GM18951 (cell line): ENCODE measurements at regions of chr19 and their contacts with region 1.

Region 1: GRCh38 chr19:33235269-33235995 is 9.8 kb upstream of the SLC7A10 start:
- POLR2A ChIP-seq: no peak

Region 2: GRCh38 chr19:33029746-33030303 is 205.6 kb before region 1 on chr19:
- in situ Hi-C with region 1: no loop called
- POLR2A ChIP-seq: no peak

Region 3: DNA sequence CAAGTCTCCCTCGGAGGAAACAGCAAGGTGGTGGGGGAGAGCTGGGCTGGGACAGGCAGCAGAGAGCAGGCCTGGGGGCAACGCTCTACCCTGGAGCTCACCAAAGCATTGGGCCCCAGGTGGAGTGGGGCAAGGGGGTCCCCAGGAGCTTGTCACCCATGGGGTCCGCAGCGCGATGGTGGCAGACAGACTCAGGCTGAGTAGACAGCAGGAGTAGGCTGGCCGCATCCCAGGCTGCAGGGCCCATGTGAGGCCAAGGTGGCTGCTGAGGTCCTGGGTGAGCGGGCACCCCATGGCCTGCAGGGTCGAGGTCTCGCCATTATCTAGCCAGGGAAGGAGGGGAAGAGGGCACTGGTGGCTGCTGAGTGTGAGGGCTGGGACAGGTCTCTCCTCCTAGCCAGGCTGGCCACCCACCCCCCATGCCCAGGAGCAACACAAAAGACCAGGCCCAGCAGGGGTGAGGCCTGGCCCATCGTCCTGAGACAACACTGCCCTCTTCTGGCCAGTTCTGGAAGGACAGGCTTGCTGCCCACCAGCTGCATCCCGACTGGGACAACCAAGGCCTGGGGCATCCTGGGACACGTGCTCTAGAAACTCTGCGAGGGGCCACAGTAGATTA is 171.2 kb after region 1 on chr19:
- in situ Hi-C with region 1: loop called (anchors 10 kb)
- POLR2A ChIP-seq: no peak

Region 4: DNA sequence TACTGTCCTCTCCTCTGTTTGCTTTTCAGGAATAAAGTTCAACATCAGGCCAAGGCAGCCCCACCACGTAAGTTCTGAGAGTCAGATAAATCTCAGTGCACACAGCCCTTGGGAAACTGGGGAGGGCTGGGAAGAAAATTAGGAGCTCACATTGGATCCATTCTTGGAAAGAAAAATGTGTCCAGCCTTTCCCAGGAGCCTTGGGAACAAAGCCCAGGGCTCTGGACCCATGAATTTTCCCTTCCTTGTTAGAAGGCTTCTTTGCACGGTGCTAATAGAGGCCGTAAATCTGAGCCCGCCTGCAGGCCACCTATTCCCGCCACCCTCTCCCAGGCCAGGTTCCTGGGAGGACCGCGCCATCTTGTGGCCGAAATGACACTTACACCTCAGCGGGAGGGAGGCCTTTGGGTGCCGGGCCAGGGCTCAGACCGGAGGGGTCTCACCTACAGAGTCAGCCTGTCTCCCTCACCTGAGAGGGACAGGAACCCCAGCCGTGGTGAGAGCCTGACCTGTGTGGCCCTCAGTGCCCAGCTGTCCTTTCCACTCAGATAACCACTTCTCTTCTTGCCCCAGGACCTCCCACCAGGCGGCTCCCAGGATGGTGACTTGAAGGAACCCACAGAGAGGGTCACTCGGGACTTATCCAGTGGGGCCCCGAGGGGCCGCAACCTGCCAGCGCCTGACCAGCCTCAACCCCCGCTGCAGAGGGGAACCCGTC is 536.1 kb after region 1 on chr19:
- in situ Hi-C with region 1: loop called (anchors 25 kb)
- POLR2A ChIP-seq: no peak